WTC11 (cell line): ENCODE measurements at regions of chr6 and their contacts with region 1.

Region 1: DNA sequence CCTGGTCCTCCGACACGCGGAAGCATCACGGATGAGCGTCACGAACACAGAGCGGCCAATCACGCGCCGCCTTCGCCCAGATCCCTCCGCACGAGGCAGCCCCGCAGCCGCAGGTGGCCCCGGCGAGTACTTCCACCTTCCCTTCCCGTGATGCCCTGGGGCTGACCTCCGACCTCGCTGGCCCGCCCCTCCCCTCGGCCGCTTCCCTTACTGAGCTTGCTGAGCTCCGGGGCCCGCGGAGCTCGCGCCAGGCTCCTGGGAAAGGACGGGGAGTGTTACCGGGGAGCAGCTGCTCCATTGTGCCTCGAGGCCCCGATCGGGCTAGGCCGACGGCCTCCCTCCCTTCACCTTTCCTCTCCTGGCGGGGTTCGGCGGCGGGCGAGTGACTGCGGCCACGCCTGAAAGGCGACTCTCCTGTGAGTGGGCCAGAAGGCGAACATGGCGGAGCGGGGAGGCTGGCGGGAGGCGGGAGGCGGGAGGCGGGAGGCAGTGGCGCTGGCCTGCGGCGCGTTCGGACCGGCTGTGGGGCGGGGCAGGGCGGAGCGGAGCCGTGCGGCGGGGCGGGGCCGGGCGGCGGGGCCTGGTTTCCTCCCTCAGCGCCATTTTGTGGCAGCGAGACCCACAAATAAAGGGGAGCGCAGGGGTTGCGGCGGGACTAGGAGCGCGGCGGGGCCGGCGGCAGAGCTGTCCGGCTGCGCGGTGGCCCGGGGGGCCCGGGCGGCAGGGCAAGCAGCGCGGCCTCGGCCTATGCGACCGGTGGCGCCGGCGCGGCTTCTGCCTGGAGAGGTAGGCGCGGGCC is at the start of gene WTAP:
- DNase-seq: peak; percentile 97
- ATAC-seq: peak; percentile 86
- H3K4me3 Mint-ChIP-seq: peak within 1 kb of the TSS; percentile 93
- H3K27ac Mint-ChIP-seq: peak within 1 kb of the TSS; percentile 98
- H3K4me1 Mint-ChIP-seq: peaks cover 29% of the 10 kb centered on the region
- H3K27me3 Mint-ChIP-seq: no peaks in the 10 kb centered on the region
- CTCF ChIP-seq: no peak
- total RNA-seq, gene WTAP: 88.8 to 92.7 TPM (median 91.9 TPM) in 3 replicates

Region 2: DNA sequence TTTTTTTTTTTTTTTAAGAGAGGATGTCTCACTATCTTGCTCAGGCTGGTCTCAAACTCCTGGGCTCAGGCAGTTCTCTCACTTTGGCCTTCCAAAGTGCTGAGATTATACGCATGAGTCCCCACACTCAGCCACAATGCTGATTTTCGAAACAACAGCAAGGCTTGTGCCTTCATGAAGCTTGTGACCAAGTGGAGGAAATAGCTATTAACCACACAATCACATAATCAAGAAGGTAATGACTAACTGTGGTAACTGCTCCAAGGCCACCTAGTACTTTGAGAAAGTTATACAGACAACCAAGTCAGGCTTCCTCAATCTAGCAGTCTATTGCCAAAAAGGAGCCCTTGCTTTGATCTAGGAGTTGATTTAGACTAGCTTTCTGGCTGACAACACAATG is 80.4 kb before region 1 on chr6:
- CTCF ChIA-PET with region 1: no interaction called
- POLR2A ChIA-PET with region 1: no interaction called
- DNase-seq: no peak
- ATAC-seq: no peak
- H3K4me3 Mint-ChIP-seq: no peak overlapping the region
- H3K27ac Mint-ChIP-seq: no peak overlapping the region
- H3K4me1 Mint-ChIP-seq: no peaks in the 10 kb centered on the region
- H3K27me3 Mint-ChIP-seq: no peaks in the 10 kb centered on the region
- CTCF ChIP-seq: no peak

Region 3: DNA sequence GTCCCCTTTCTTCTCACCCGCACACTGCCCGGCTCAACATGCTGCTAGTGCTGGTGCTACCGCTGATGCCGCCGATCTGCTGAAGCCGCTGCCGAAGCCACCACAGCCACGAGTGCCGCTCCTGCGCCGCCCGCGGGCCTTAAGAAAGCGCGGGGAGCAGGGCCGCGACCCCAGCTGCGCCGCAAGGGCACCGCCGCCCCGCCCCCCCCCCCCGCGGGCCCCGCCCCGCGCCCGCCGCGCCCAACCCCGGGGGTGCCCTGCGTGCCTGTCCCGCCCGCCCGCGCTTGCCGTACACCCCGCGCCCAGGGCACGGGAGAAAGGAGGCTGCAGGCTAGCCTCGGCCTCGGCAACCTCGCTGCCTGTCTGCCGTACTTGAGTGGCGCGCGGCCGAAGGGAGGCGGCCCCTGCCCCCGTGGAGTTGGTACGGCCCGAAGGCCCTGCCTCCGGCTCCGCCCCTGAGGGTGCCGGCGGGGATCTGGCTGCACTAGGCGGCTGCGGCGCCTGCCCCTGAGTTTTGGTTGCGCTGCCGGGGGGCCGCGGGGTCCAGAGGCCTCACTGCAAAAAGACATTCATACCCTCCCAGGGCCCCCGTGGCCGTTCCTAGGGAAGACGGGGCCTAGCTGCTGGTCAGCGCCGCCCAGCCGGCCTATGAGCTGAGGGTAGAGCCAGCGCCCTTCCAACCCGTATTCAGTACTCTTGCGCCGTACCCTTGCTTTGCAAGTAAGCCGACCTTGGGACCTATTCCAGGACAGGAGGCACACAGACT is 33.8 kb before region 1 on chr6 and contains the start of gene SOD2:
- CTCF ChIA-PET with region 1: interaction called, 4 read pairs
- POLR2A ChIA-PET with region 1: interaction called, 20 read pairs
- DNase-seq: peak; percentile 87
- ATAC-seq: peak; percentile 81
- H3K4me3 Mint-ChIP-seq: peak within 1 kb of the TSS; percentile 85
- H3K27ac Mint-ChIP-seq: peak within 1 kb of the TSS; percentile 84
- H3K4me1 Mint-ChIP-seq: peaks cover 25% of the 10 kb centered on the region
- H3K27me3 Mint-ChIP-seq: no peaks in the 10 kb centered on the region; the same call in 1 of the 2 replicates
- CTCF ChIP-seq: no peak
- total RNA-seq, gene SOD2: 79.8 to 86.3 TPM (median 82.6 TPM) in 3 replicates

Region 4: DNA sequence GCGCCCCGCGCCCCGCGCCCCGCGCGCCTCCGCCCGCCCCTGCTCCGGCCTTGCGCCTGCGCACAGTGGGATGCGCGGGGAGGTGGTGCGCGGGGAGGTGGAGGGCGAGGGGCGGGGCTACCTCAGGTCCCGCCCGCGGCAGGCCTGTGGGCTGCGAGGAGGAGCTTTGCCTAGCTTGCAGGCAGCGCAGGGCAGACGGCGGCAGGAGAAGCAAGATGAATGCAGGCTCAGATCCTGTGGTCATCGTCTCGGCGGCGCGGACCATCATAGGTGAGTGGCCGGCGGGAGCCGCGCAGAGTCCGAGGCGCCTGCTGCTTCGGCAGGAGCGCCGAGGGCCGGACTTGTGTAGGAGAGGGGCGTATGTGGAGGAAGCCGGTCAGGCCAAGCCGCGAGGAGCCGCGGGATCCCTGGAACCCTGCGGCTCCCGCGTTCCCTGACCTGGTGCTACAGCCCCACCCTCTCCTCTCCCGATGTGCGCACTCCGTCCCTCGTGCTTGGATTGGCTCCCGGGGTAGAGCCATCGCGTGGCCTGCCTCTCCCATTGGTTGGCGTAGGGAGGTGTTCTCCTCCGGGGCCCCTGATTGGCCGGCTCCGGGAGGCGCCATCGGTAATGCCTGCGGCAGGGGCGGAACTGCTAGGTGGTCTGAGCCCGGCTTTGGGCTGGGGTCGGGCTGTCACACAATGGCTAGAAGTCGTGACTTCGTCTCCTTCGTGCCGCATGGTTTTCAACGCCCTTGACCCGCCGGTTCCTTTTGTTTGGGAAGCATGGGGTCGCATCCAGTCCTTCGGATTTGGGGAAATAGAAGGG is 35.0 kb after region 1 on chr6 and contains the start of gene ACAT2:
- CTCF ChIA-PET with region 1: no interaction called
- POLR2A ChIA-PET with region 1: interaction called, 10 read pairs
- DNase-seq: peak; percentile 93
- ATAC-seq: peak; percentile 92
- H3K4me3 Mint-ChIP-seq: peak within 1 kb of the TSS; percentile 81
- H3K27ac Mint-ChIP-seq: peak within 1 kb of the TSS; percentile 97
- H3K4me1 Mint-ChIP-seq: peaks cover 34% of the 10 kb centered on the region
- H3K27me3 Mint-ChIP-seq: no peaks in the 10 kb centered on the region; the same call in 1 of the 2 replicates
- CTCF ChIP-seq: no peak
- total RNA-seq, gene ACAT2: 96.1 to 138 TPM (median 98.7 TPM) in 3 replicates